ENCODE measurements at regions of chr6 and their contacts with region 1.

Region 1: GRCh38 chr6:107459283-107460082 is at the start of gene PDSS2:
- DNase-seq: peak; percentile 98
- H3K4me3 Mint-ChIP-seq: peak within 1 kb of the TSS; percentile 94
- H3K27ac Mint-ChIP-seq: peak within 1 kb of the TSS; percentile 93
- H3K4me1 Mint-ChIP-seq: peaks cover 25% of the 10 kb centered on the region
- H3K27me3 Mint-ChIP-seq: no peaks in the 10 kb centered on the region
- total RNA-seq, gene PDSS2: 11.5 to 11.8 TPM

Region 2: GRCh38 chr6:106981926-106982325 is 477.6 kb before region 1 on chr6:
- CTCF ChIA-PET with region 1: no interaction called
- POLR2A ChIA-PET with region 1: no interaction called
- DNase-seq: no peak
- H3K4me3 Mint-ChIP-seq: no peak overlapping the region
- H3K27ac Mint-ChIP-seq: no peak overlapping the region
- H3K4me1 Mint-ChIP-seq: peaks cover 3% of the 10 kb centered on the region
- H3K27me3 Mint-ChIP-seq: peaks cover 30% of the 10 kb centered on the region

Region 3: DNA sequence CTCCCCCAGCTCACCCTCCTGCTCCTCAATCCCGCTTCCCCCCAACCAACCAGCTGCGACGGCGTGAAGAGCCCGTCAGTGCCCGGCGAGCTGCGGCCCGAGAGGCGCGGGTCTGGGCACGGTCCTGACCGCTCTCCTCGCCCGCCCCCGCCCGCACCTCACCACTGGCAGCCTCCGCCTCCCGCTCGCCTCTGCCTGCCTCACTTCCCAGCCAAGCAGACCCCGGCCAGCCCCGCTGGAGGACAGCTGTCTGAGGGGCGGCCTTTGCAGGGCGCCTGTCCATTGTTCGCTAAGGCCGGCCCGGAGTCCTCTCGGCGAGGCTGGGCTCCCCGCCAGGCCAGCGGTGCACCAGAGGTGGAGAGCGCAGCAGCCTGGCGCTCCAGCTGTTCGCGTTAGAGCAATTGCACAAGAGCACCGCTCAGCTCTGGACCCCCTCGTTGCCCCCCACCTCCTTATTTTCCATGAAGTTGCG is 31.7 kb after region 1 on chr6:
- CTCF ChIA-PET with region 1: interaction called, 5 read pairs
- POLR2A ChIA-PET with region 1: interaction called, 10 read pairs
- DNase-seq: no peak
- H3K4me3 Mint-ChIP-seq: peak overlapping the region; percentile 72
- H3K27ac Mint-ChIP-seq: no peak overlapping the region
- H3K4me1 Mint-ChIP-seq: peaks cover 24% of the 10 kb centered on the region
- H3K27me3 Mint-ChIP-seq: peaks cover 53% of the 10 kb centered on the region

Region 4: DNA sequence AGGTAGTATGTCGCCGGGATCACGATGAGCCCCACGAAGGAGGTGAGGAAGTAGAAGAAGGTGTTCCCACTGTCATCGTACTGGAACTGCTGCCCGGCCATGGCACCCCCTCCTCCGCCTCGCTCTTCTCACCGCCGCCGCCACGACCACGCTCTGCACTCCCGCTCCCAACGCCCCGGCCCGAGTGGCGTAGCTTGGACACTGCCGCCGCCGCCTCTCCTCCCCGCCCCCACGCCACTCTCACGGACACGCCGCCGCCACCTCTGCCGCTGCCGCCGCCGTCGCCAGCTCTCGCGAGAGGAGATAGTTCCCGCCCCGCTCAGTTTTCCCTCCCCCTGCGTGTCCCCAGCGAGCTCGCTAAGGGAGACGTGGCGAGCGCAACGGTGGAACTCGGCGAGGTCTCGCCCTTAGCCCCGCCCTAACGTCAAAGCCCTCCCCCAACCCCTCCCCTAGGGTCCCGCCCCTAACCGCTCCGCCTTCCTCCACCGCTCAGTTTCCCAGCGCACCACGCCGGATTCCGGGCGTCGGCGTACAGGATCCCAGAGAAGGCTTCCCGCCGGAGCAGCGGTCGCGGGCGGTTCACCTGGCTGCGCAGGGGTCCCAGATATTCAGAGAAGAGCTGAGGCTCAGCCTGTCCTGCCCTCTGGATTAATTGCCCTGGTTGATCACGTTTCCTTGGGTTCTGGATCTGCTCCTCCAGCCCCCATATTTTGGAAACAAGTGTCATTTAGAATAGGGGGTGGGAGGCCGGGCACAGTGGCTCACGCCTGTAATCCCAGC is 498.6 kb after region 1 on chr6 and contains the start of gene SEC63:
- CTCF ChIA-PET with region 1: no interaction called
- POLR2A ChIA-PET with region 1: interaction called, 10 read pairs
- DNase-seq: peak; percentile 98
- H3K4me3 Mint-ChIP-seq: peak within 1 kb of the TSS; percentile 97
- H3K27ac Mint-ChIP-seq: peak within 1 kb of the TSS; percentile 94
- H3K4me1 Mint-ChIP-seq: peaks cover 33% of the 10 kb centered on the region
- H3K27me3 Mint-ChIP-seq: peaks cover 5% of the 10 kb centered on the region
- total RNA-seq, gene SEC63: 71.2 to 74.5 TPM

Measured in activated CD4-positive, alpha-beta memory T cell treated with anti-CD3 and anti-CD28 coated beads, Interleukin-2, amount 10 ng/mL, durations not matched to agents 7 days and 5 days (primary cell).